MCF 10A (cell line): ENCODE measurements at regions of chr1 and their contacts with region 1.

Region 1: DNA sequence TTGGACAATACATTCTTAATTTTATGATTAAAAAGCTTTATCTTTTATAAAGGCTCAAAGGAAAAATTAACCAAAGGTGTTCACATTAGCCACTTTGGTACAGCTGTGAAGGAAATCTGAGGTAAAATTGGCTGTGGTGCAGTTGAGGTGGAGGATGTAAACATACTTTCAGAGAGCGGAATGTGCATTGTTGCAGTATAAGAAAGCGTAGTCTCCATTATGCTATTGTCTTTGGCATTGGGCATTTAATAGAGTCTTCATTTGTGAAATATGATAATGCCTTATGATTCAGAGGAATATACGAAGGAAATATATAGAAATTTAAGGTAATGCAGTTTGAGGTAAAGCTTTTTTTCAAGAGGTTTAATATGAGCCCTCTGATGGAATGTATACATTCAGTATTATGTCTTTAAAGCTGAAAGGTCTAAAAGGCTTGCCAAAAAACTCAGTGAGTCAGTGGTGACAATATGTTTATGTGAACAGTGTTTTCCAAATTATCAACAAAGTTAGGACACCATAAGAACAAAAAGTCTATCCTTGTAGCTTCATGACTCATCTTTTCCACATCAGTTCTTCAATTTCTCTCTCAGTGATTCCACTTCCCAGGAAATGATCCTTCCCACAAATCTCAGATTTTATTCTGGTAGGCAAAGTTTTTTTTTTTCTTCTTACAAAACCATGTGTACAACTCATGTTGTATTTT is 26.9 kb upstream of the DDR2 start:
- DNase-seq: peak; percentile 98
- H3K4me3 Mint-ChIP-seq: peak overlapping the region; percentile 13
- H3K27ac Mint-ChIP-seq: peak overlapping the region; percentile 91
- H3K4me1 Mint-ChIP-seq: peaks cover 20% of the 10 kb centered on the region
- H3K27me3 Mint-ChIP-seq: no peaks in the 10 kb centered on the region
- CTCF ChIP-seq: no peak

Region 2: DNA sequence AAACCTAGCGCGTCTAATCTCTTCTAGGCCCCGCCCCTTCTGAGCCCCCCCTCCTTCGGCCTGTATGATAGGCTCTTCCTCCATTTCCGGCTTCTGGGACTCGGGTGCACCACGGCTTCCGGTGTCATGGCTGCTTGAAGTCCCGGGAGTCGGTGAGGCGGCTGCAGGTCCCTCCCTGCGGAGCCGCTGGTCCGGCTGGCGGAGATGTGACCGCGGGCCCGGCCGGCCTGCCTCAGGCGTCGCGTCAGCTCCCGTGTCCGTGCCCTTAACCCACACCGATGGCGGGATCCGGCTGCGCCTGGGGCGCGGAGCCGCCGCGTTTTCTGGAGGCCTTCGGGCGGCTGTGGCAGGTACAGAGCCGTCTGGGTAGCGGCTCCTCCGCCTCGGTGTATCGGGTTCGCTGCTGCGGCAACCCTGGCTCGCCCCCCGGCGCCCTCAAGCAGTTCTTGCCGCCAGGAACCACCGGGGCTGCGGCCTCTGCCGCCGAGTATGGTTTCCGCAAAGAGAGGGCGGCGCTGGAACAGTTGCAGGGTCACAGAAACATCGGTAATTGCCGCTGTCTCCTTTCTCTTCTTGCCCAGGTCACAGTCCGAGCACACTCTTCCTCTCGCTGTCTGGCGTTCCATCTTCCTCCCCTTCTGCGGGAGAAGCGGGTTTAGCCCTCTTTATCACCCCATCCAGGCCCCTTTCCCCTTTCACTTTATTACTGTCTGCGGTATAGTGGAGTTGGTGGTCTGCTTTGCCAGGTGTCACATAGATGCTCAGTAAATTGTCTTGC is 107.5 kb before region 1 on chr1 and contains the start of gene UHMK1:
- CTCF ChIA-PET with region 1: interaction called, 3 read pairs
- POLR2A ChIA-PET with region 1: interaction called, 12 read pairs
- intact Hi-C with region 1: loop called (anchors 5 kb)
- DNase-seq: peak; percentile 97
- H3K4me3 Mint-ChIP-seq: peak within 1 kb of the TSS; percentile 91
- H3K27ac Mint-ChIP-seq: peak within 1 kb of the TSS; percentile 82
- H3K4me1 Mint-ChIP-seq: peaks cover 12% of the 10 kb centered on the region
- H3K27me3 Mint-ChIP-seq: peaks cover 8% of the 10 kb centered on the region
- CTCF ChIP-seq: no peak
- total RNA-seq, gene UHMK1: 76.9 and 102 TPM in 2 replicates

Region 3: DNA sequence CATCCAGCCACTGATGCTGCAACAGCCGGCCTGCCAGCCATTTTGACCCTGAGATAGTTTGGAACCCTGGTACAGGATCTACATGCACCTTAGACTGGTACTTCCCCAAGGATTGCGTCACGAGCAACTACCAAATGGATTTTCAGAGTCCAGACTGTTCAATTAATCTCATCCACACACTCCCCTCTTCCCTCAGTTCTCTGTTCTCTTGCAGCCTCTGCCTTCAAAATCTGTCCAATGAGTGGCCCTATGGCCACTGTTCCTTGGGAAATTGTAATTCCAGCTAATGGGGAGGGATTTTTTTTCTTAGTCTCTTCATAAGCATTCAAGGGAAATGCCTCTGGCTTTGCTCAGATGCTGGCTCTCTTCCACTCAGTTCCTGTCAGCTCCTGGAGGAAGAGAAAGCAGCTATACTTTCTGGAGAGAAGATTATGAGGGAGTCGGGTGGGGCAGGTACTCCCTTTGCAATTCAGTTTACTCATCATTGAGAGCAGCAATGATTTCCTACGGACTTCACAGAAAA is 63.7 kb before region 1 on chr1:
- CTCF ChIA-PET with region 1: interaction called, 3 read pairs
- POLR2A ChIA-PET with region 1: interaction called, 8 read pairs
- intact Hi-C with region 1: loop called (anchors 2 kb)
- DNase-seq: peak; percentile 96
- H3K4me3 Mint-ChIP-seq: peak overlapping the region; percentile 20
- H3K27ac Mint-ChIP-seq: peak overlapping the region; percentile 73
- H3K4me1 Mint-ChIP-seq: peaks cover 41% of the 10 kb centered on the region
- H3K27me3 Mint-ChIP-seq: no peaks in the 10 kb centered on the region
- CTCF ChIP-seq: no peak

Region 4: DNA sequence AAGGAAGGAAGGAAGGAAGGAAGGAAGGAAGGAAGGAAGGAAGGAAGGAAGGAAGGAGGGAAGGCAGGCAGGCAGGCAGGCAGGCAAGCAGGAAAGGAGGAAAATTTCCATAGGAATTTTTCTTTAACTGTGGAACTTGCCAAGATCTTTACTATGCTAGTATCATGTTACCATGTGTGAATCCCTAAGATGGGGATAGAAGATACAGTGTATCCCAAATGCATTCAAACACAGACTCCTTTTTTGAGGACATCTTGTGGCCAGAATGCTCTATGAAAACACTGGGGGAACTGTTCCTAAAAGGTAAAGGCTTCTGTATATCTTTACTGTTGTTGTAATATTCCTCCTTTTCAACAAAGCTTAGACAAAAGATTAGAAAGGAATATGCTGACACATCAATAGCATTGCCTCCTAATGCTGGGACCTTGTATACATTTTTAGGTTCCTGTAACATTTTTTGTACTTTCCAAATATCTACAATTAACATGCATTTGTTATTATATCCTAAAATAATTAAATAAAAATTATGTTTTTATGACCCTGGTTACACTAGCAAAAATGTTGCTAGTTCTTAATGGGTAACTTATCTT is 235.0 kb after region 1 on chr1:
- CTCF ChIA-PET with region 1: no interaction called
- POLR2A ChIA-PET with region 1: no interaction called
- intact Hi-C with region 1: no loop called
- DNase-seq: peak; percentile 10
- H3K4me3 Mint-ChIP-seq: no peak overlapping the region
- H3K27ac Mint-ChIP-seq: no peak overlapping the region
- H3K4me1 Mint-ChIP-seq: no peaks in the 10 kb centered on the region
- H3K27me3 Mint-ChIP-seq: peaks cover 36% of the 10 kb centered on the region
- CTCF ChIP-seq: no peak